Right ventricle myocardium inferior (tissue), 1 donor: ENCODE measurements at regions of chr6 and their contacts with region 1.

Region 1: DNA sequence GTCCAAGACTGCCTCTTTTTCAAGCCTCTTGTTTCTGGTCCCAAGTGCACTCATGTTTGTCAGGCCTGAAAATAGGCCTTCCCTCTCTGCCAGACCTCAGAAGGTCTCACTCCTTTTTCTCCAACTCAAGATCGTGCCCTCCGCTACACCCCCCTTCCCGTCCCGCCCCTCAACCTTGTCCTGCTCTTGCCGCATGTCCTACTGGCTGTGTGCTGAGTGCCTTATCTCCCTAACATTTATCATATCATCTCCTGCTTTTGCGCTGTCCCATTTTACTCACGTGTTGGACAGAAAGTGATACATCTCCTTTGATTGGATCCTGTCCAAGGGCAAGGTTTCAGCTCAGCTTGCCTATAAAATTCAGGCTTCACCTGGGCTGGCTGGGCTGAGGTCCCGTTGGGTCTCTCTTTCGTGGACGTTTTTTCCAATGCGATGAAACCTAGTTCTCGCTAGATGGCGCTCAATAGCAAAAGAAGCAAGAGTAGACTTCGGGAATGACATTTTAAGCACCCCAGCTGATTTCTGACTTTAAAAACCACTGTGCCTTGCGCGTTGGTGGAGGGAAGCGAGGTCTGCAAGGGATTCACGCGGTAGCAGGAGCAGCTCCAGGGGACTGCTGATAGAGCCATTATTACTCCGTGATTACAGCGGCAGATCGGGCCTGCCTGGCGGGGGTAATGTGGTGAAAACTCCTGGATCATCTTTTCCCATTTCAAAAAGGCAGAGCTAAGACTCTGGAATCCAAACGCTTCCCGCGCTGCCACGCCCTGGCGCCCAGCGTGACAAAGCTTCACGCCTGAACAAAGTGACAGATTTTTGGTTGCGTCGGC is 137.6 kb downstream of the IMPG1 start:
- DNase-seq: no peak
- ATAC-seq: peak; percentile 60

Region 2: GRCh38 chr6:76351275-76351674 is 416.4 kb after region 1 on chr6:
- intact Hi-C with region 1: loop called (anchors 2 kb)
- DNase-seq: no peak
- ATAC-seq: no peak

Region 3: DNA sequence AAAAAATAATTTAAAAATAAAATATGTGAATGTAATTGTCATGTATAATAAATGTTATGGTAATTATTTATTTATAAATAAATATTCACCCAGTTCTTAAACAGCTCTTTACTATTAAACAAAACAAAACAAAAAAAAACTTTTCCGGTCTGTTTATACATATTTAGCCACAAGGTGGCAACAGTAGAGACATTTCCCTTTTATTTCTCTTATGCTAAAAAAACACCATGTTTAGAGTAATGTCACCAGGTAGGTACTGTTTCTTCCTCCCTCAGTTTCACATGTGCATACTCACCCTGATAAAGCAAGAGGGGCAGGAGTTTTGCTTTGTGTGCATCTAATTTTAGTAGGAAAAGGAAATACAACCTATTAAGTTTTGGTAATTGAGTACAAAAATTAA is 748.0 kb after region 1 on chr6:
- intact Hi-C with region 1: loop called (anchors 10 kb)
- DNase-seq: no peak
- ATAC-seq: no peak

Region 4: GRCh38 chr6:76861403-76861802 is 926.5 kb after region 1 on chr6:
- intact Hi-C with region 1: loop called (anchors 10 kb)
- DNase-seq: no peak
- ATAC-seq: no peak